GM12878 (cell line): ENCODE measurements at regions of chr17 and their contacts with region 1.

Region 1: GRCh38 chr17:6666077-6666521 is 14.5 kb downstream of the C17orf100 start:
- DNase-seq: no peak
- ATAC-seq: peak; percentile 96
- H3K4me3 ChIP-seq: no peak overlapping the region
- H3K27ac ChIP-seq: no peak overlapping the region
- H3K4me1 ChIP-seq: peaks cover 4% of the 10 kb centered on the region
- H3K27me3 ChIP-seq: no peaks in the 10 kb centered on the region
- CTCF ChIP-seq: peak; percentile 86 to 96 (median 92)
- EP300 ChIP-seq: no peak
- POLR2A ChIP-seq: no peak
- RAD21 ChIP-seq: peak; percentile 98

Region 2: GRCh38 chr17:6473128-6473767 is 192.9 kb before region 1 on chr17:
- CTCF ChIA-PET with region 1: interaction called, 10 read pairs
- POLR2A ChIA-PET with region 1: no interaction called
- RAD21 ChIA-PET with region 1: interaction called, 3 read pairs
- SMC1A ChIA-PET with region 1: no interaction called
- in situ Hi-C with region 1: no loop called
- intact Hi-C with region 1: no loop called
- DNase-seq: no peak
- ATAC-seq: peak; percentile 93
- H3K4me3 ChIP-seq: no peak overlapping the region
- H3K27ac ChIP-seq: no peak overlapping the region
- H3K4me1 ChIP-seq: no peaks in the 10 kb centered on the region
- H3K27me3 ChIP-seq: no peaks in the 10 kb centered on the region
- CTCF ChIP-seq: peak; percentile 85 to 96 (median 91)
- EP300 ChIP-seq: no peak
- POLR2A ChIP-seq: no peak
- RAD21 ChIP-seq: peak; percentile 69

Region 3: DNA sequence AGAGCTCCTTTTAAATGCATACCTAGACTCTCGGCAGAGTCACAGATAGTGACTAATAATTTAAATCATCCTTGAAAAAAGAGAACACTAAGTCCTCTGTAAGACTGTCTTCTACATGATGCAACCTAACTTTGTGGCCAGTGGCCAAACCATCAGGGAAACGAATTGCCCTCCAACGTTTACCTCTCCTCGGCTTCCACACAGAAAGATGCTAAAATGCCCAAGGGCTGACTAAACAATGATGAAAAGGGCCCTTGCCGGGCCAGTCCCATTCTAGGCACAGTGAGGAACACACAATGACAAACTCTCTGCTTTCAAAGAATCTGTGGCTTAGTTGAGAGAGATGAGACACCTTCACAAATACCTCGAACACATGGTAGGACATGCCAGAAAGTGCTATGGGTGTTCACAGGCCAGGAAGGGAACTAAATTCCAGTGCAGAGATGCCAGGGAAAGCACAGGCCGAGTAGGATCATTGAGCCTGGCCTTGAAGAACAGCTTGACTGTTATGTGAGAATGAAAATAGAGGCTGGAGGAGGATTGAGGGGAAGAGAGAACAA is 74.4 kb before region 1 on chr17:
- CTCF ChIA-PET with region 1: no interaction called
- POLR2A ChIA-PET with region 1: no interaction called
- RAD21 ChIA-PET with region 1: no interaction called
- SMC1A ChIA-PET with region 1: no interaction called
- in situ Hi-C with region 1: no loop called
- intact Hi-C with region 1: no loop called
- DNase-seq: no peak
- ATAC-seq: no peak
- H3K4me3 ChIP-seq: no peak overlapping the region
- H3K27ac ChIP-seq: no peak overlapping the region
- H3K4me1 ChIP-seq: no peaks in the 10 kb centered on the region
- H3K27me3 ChIP-seq: no peaks in the 10 kb centered on the region
- CTCF ChIP-seq: no peak
- EP300 ChIP-seq: no peak
- POLR2A ChIP-seq: no peak
- RAD21 ChIP-seq: no peak

Region 4: GRCh38 chr17:6753006-6753445 is 86.9 kb after region 1 on chr17:
- CTCF ChIA-PET with region 1: interaction called, 4 read pairs
- POLR2A ChIA-PET with region 1: no interaction called
- RAD21 ChIA-PET with region 1: interaction called, 3 read pairs
- SMC1A ChIA-PET with region 1: no interaction called
- in situ Hi-C with region 1: no loop called
- intact Hi-C with region 1: loop called (anchors 10 kb)
- DNase-seq: no peak
- ATAC-seq: peak; percentile 11; the same call in 1 of the 3 replicates
- H3K4me3 ChIP-seq: no peak overlapping the region
- H3K27ac ChIP-seq: peak overlapping the region; percentile 15; the same call in 1 of the 2 replicates
- H3K4me1 ChIP-seq: peaks cover 15% of the 10 kb centered on the region
- H3K27me3 ChIP-seq: no peaks in the 10 kb centered on the region
- CTCF ChIP-seq: no peak
- EP300 ChIP-seq: no peak
- POLR2A ChIP-seq: no peak
- RAD21 ChIP-seq: no peak